T-cell (primary cell): ENCODE measurements at regions of chr2 and their contacts with region 1.

Region 1: DNA sequence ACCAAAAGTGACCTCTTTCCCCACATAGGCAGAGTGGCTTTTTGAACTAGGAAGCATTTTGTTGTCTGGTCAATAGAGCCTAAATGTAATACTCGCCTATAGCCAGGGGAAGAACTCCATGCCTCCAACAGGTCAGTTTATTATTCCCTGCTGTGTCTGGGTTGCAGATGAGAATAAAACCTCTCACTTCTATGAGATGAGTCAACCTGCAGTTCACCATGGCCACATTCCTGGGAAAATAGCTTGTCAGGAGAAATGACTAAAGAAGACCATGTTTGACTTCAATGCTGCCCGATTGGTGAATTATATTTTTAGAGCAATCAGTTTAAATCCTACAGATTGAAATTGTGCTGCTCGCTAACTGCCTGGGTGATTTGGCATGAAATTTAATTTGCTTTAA is 46.7 kb upstream of the LRRTM1 start:
- DNase-seq: no peak
- ATAC-seq: no peak
- H3K4me3 ChIP-seq: no peak overlapping the region
- H3K4me3 Mint-ChIP-seq: no peak overlapping the region
- H3K27ac ChIP-seq: no peak overlapping the region
- H3K27ac Mint-ChIP-seq: no peak overlapping the region
- H3K4me1 ChIP-seq: no peaks in the 10 kb centered on the region
- H3K4me1 Mint-ChIP-seq: no peaks in the 10 kb centered on the region
- H3K27me3 ChIP-seq: no peaks in the 10 kb centered on the region
- H3K27me3 Mint-ChIP-seq: no peaks in the 10 kb centered on the region

Region 2: DNA sequence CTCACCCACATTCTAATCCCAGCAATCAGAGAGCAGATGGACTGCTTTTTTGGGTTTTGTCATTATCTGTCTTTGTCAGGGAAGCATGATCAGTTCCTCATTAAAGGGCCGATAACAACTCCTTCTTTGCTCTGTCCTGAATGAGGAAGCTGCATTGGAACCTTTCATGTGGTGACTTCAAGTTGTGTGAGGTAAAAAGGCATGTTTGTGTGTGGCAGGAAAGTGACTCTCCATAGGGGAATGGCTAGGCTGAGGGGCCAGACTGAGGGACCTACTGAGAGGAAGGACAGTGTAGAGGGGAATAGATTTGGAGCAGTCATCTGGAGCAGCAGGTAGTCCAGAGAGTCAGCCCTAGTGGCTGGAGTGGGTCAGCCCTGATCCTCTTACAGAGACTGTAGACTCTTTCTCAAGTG is 23.1 kb before region 1 on chr2:
- CTCF ChIA-PET with region 1: no interaction called
- POLR2A ChIA-PET with region 1: no interaction called
- DNase-seq: no peak
- ATAC-seq: no peak
- H3K4me3 ChIP-seq: no peak overlapping the region
- H3K4me3 Mint-ChIP-seq: no peak overlapping the region
- H3K27ac ChIP-seq: no peak overlapping the region
- H3K27ac Mint-ChIP-seq: no peak overlapping the region
- H3K4me1 ChIP-seq: no peaks in the 10 kb centered on the region
- H3K4me1 Mint-ChIP-seq: no peaks in the 10 kb centered on the region
- H3K27me3 ChIP-seq: peaks cover 0 to 2% of the 10 kb centered on the region in 2 experiments
- H3K27me3 Mint-ChIP-seq: no peaks in the 10 kb centered on the region

Region 3: GRCh38 chr2:80364524-80365212 is 13.4 kb after region 1 on chr2:
- CTCF ChIA-PET with region 1: no interaction called
- POLR2A ChIA-PET with region 1: interaction called in 1 of 2 experiments, 12 read pairs
- DNase-seq: no peak
- ATAC-seq: no peak
- H3K4me3 ChIP-seq: no peak overlapping the region
- H3K4me3 Mint-ChIP-seq: no peak overlapping the region
- H3K27ac ChIP-seq: no peak overlapping the region
- H3K27ac Mint-ChIP-seq: no peak overlapping the region
- H3K4me1 ChIP-seq: no peaks in the 10 kb centered on the region
- H3K4me1 Mint-ChIP-seq: no peaks in the 10 kb centered on the region
- H3K27me3 ChIP-seq: no peaks in the 10 kb centered on the region
- H3K27me3 Mint-ChIP-seq: no peaks in the 10 kb centered on the region